A673 (cell line): ENCODE measurements at regions of chr1 and their contacts with region 1.

Region 1: DNA sequence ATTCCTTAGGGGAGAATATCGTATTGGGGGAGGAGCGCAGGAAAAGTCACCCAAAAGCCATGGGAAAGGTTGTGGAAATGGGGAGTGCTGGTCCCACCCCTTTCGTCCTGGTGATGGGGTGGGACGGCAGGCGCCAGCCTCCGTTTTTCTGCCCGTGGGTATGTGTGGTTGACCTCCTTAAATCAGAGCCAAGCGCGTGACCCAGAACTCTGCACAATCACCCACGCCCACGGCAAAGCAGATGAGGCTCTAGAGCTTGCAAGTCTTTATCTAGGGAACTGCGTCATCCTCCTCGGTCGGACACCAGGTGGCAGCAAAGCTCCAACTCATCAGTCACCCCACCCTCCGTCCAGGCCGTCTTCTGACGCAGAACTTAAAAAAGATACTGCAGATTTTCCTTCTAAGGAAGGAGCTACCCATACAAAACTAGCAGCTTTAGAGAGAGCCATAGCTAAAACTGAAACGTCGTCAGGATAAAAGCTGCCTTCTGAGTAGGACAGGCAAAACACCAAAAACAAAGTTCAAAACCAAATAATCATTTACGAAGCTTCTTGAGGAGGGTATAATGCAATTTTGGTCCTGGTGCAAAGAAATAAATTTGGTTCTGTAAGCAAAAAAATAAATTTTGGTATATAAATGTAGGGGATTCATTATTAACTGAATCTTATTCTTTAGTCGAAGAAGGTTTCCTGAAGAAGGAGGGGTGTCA is 62.0 kb downstream of the TBX19 start:
- DNase-seq: peak; percentile 88
- H3K4me3 ChIP-seq: peak overlapping the region; percentile 29
- H3K27ac ChIP-seq: no peak overlapping the region
- H3K4me1 ChIP-seq: no peaks in the 10 kb centered on the region
- H3K27me3 ChIP-seq: no peaks in the 10 kb centered on the region
- CTCF ChIP-seq: peak; percentile 73

Region 2: DNA sequence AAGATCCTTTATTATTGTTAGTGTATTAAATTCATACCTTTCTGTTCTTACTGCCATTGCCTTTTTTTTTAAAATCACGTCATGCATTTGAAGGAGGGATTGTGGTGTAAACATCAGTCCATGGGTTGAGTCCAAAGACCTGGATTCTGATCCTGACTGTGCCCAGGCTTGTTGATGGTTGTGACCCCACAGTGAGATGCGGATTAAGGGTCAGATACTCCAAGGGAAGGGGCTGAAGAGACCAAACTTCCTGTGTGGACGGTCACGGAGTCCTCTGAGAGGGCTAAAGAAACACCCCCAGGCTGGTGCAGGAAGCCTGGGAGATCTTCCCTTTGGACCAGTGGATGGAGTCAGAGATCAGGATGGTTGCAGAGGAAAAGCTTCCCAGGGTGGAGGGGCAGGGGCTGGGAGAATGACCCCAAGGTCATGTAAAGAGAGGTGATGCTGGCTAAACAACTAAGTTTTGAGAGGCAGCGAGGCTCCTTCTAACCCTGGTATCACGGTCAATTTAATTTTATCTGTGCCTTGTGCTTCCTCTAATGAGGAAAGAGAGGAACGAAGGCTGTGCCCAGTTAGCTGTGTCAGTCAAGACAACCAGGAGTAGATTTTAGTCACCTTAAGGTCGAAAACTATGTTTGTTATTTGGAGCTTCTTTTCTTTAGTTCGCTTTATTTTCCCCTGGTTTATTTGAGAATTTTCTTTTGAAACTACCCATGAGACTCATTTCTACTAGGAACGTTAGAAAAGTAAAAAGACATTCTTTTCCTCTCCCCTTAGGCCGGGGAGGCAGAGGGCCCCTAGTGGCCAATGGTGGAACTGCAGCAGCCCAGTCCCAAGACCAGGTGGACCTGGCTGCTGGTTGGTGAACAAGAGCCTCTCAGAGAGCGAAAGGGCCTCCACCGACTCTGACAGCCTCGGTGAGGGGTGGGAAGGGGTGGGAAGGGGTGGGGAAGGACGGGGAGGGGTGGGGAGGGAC is 197.3 kb before region 1 on chr1:
- CTCF ChIA-PET with region 1: no interaction called
- POLR2A ChIA-PET with region 1: no interaction called
- intact Hi-C with region 1: no loop called
- DNase-seq: peak; percentile 91
- H3K4me3 ChIP-seq: no peak overlapping the region
- H3K27ac ChIP-seq: no peak overlapping the region
- H3K4me1 ChIP-seq: peaks cover 3% of the 10 kb centered on the region
- H3K27me3 ChIP-seq: no peaks in the 10 kb centered on the region
- CTCF ChIP-seq: peak; percentile 96

Region 3: GRCh38 chr1:168261390-168261789 is 81.3 kb before region 1 on chr1:
- CTCF ChIA-PET with region 1: no interaction called
- POLR2A ChIA-PET with region 1: no interaction called
- intact Hi-C with region 1: no loop called
- DNase-seq: no peak
- H3K4me3 ChIP-seq: no peak overlapping the region
- H3K27ac ChIP-seq: no peak overlapping the region
- H3K4me1 ChIP-seq: no peaks in the 10 kb centered on the region
- H3K27me3 ChIP-seq: no peaks in the 10 kb centered on the region
- CTCF ChIP-seq: no peak

Region 4: DNA sequence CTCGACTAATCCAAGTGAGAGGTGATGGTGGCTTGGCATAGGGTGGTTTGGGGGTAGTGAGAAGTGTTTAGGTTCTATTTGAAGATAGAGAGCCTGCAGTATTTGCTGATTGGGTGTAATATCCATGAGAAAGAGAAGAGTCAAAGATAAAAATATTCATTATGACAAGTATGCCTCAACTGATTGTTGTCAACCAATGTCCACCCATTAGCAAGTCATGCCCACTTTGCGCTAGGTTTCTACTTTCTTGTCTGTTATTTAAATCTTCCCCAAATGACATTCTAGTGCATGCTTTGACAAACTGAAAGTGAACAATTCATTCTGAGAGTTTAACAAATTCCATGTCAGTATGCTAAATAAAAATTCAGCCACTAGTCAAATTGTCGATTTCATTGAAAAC is 229.9 kb after region 1 on chr1:
- CTCF ChIA-PET with region 1: no interaction called
- POLR2A ChIA-PET with region 1: no interaction called
- intact Hi-C with region 1: loop called (anchors 5 kb)
- DNase-seq: no peak
- H3K4me3 ChIP-seq: no peak overlapping the region
- H3K27ac ChIP-seq: no peak overlapping the region
- H3K4me1 ChIP-seq: no peaks in the 10 kb centered on the region
- H3K27me3 ChIP-seq: no peaks in the 10 kb centered on the region
- CTCF ChIP-seq: no peak